AG04449 (cell line): ENCODE measurements at regions of chr19 and their contacts with region 1.

Region 1: DNA sequence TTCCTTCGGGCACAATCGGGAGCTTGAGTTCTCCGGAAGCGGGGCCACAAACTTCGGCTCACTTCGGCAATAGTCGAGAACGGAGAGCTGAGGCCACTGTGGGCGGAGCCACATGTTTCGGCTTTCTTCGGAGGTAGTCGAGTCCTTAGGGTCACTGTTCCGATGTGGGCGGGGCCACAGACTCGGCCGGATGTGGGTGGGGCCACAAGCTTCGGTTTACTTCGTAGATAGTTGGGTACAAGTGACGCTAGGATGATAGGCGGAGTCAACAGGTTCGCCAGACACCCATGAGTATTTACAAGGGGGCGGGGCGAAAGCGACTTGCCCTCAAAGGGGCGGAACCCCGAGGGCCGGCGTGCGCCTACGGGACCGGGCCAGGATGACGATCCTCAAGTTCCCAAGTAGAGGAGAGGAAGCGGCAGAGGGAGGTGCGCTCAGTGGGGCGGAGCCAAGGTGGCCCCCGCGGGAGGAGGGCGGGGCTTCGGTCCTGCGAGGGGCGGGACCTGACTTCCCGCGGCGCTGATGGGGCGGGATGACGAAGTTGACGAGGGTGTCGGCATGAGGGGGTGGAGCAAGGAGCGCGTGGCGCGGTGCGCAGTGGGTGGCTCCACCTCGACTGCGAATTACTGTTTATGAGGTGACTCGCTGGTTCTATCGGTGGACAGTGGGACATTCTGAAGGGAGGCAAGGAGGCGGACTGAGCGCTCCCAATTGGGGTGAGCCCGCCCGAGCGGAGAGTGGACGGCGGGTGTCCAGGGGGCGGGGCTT is 539 bp upstream of the MBOAT7 start:
- DNase-seq: peak; percentile 100
- H3K4me3 ChIP-seq: peak overlapping the region; percentile 89
- CTCF ChIP-seq: no peak

Region 2: GRCh38 chr19:54203151-54203611 is 13.3 kb after region 1 on chr19:
- CTCF ChIA-PET with region 1: interaction called, 12 read pairs
- POLR2A ChIA-PET with region 1: interaction called, 108 read pairs
- DNase-seq: no peak
- H3K4me3 ChIP-seq: no peak overlapping the region; the same call in 1 of the 2 replicates
- CTCF ChIP-seq: no peak